PC-3 (cell line): ENCODE measurements at regions of chr3 and their contacts with region 1.

Region 1: DNA sequence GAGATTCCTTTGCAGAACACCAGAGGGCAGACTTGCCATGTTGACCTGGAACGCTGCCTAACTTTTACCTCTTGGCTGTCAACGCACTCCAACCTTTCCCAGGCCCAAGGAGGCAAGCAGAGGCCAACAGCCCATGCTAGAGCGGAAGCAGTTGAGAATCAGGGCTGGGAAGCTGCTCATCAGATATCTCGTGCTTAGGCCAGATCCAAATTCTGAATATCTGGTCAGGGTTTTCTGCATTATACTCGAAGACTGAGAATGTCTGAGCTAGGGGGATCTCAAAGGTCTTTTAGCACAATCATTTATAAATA is 2.5 kb downstream of the XIRP1 start:
- DNase-seq: peak; percentile 79
- ATAC-seq: peak; percentile 82
- H3K4me3 ChIP-seq: no peak overlapping the region
- H3K27ac ChIP-seq: no peak overlapping the region
- H3K4me1 ChIP-seq: no peaks in the 10 kb centered on the region
- H3K27me3 ChIP-seq: no peaks in the 10 kb centered on the region
- CTCF ChIP-seq: peak; percentile 88

Region 2: GRCh38 chr3:39101022-39101689 is 88.8 kb before region 1 on chr3:
- CTCF ChIA-PET with region 1: no interaction called
- POLR2A ChIA-PET with region 1: no interaction called
- intact Hi-C with region 1: loop called (anchors 1 kb)
- DNase-seq: peak; percentile 58
- ATAC-seq: peak; percentile 78
- H3K4me3 ChIP-seq: no peak overlapping the region
- H3K27ac ChIP-seq: no peak overlapping the region
- H3K4me1 ChIP-seq: peaks cover 12% of the 10 kb centered on the region
- H3K27me3 ChIP-seq: no peaks in the 10 kb centered on the region
- CTCF ChIP-seq: peak; percentile 93

Region 3: DNA sequence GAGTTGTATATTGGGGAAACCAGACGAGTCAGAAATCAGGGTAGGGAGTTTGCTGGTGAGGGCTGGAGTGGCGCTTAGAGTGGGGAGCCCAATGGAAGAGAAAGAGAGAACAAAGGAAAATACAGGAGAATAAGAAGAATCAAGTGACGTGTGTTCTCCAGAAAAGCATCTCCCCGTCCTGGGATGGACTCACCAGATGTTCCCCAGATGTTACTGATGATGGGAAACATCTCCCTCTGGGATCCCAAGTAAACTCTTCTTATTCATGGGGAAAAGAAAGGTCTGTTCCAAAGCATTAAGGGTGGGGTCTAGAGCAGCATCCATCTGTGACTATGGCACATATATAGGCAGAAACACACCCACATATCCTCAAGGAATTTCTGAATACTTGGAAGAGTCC is 33.5 kb before region 1 on chr3:
- CTCF ChIA-PET with region 1: no interaction called
- POLR2A ChIA-PET with region 1: no interaction called
- intact Hi-C with region 1: no loop called
- DNase-seq: no peak
- ATAC-seq: no peak
- H3K4me3 ChIP-seq: no peak overlapping the region
- H3K27ac ChIP-seq: no peak overlapping the region
- H3K4me1 ChIP-seq: peaks cover 9% of the 10 kb centered on the region
- H3K27me3 ChIP-seq: no peaks in the 10 kb centered on the region
- CTCF ChIP-seq: no peak

Region 4: GRCh38 chr3:39378088-39378487 is 188.2 kb after region 1 on chr3:
- CTCF ChIA-PET with region 1: no interaction called
- POLR2A ChIA-PET with region 1: no interaction called
- intact Hi-C with region 1: loop called (anchors 2 kb)
- DNase-seq: peak; percentile 78
- ATAC-seq: peak; percentile 91
- H3K4me3 ChIP-seq: no peak overlapping the region
- H3K27ac ChIP-seq: no peak overlapping the region
- H3K4me1 ChIP-seq: peaks cover 7% of the 10 kb centered on the region
- H3K27me3 ChIP-seq: peaks cover 7% of the 10 kb centered on the region
- CTCF ChIP-seq: peak; percentile 91